ENCODE measurements at regions of chrX and their contacts with region 1.

Region 1: GRCh38 chrX:39855748-39856129 is 242.0 kb downstream of the BCOR start:
- DNase-seq: peak; percentile 51 to 90 (median 68)
- H3K4me3 ChIP-seq: peak overlapping the region; percentile 71
- H3K4me3 Mint-ChIP-seq: peak overlapping the region; percentile 14 to 89 (median 84)
- H3K27ac ChIP-seq: peak overlapping the region; percentile 96
- H3K27ac Mint-ChIP-seq: peak overlapping the region; percentile 91 to 99 (median 98)
- H3K4me1 ChIP-seq: peaks cover 51% of the 10 kb centered on the region
- H3K4me1 Mint-ChIP-seq: peaks cover 49 to 82% (median 73%) of the 10 kb centered on the region in 3 donors
- H3K27me3 ChIP-seq: no peaks in the 10 kb centered on the region
- H3K27me3 Mint-ChIP-seq: no peaks in the 10 kb centered on the region

Region 2: GRCh38 chrX:39491548-39492297 is 364.0 kb before region 1 on chrX:
- CTCF ChIA-PET with region 1: no interaction called
- POLR2A ChIA-PET with region 1: no interaction called
- DNase-seq: peak in 4 of 5 donors; percentile 4 to 56 (median 30)
- H3K4me3 ChIP-seq: peak overlapping the region; percentile 38
- H3K4me3 Mint-ChIP-seq: peak overlapping the region in 6 of 7 donors; percentile 9 to 69 (median 52)
- H3K27ac ChIP-seq: no peak overlapping the region
- H3K27ac Mint-ChIP-seq: peak overlapping the region in 5 of 8 donors; percentile 6 to 76 (median 31)
- H3K4me1 ChIP-seq: peaks cover 16% of the 10 kb centered on the region
- H3K4me1 Mint-ChIP-seq: peaks cover 10 to 20% (median 18%) of the 10 kb centered on the region in 3 donors
- H3K27me3 ChIP-seq: no peaks in the 10 kb centered on the region
- H3K27me3 Mint-ChIP-seq: peaks cover 0 to 9% of the 10 kb centered on the region in 2 donors

Region 3: GRCh38 chrX:40175511-40176350 is 320.0 kb after region 1 on chrX:
- CTCF ChIA-PET with region 1: no interaction called
- POLR2A ChIA-PET with region 1: interaction called, 15 read pairs
- DNase-seq: peak; percentile 57 to 89 (median 81)
- H3K4me3 ChIP-seq: peak overlapping the region; percentile 72
- H3K4me3 Mint-ChIP-seq: peak overlapping the region; percentile 83 to 95 (median 91)
- H3K27ac ChIP-seq: peak overlapping the region; percentile 89
- H3K27ac Mint-ChIP-seq: peak overlapping the region; percentile 95 to 99 (median 98)
- H3K4me1 ChIP-seq: peaks cover 24% of the 10 kb centered on the region
- H3K4me1 Mint-ChIP-seq: peaks cover 35 to 41% (median 37%) of the 10 kb centered on the region in 3 donors
- H3K27me3 ChIP-seq: no peaks in the 10 kb centered on the region
- H3K27me3 Mint-ChIP-seq: peaks cover 0 to 36% of the 10 kb centered on the region in 2 donors

Measured in CD8-positive, alpha-beta memory T cell (primary cell).